MCF 10A (cell line): ENCODE measurements at regions of chr11 and their contacts with region 1.

Region 1: DNA sequence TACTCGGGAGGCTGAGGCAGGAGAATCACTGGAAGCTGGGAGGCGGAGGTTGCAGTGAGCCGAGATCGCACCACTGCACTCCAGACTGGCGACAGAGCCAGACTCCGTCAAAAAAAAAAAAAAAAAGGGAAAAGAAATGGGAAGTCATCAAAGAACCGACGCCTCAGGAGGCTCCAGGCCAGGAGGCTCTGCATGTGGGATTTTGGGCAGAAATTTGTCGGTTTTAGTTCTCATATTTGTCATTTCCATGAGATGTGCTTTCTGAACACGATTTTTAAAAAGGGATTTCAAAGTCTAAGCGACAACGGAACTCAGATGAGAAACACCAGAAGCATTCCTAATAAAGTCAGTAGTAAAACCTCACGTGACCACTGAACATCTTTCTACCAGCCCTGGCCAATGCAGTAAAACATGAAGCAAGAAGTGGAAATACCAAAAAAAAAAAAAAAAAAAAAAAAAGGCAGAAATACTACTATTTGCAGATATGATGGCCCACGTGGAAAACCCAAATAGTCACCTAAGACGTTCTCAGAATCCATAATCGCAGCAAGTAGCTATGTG is 738 bp upstream of the LTO1 start:
- DNase-seq: no peak
- H3K4me3 Mint-ChIP-seq: peak overlapping the region; percentile 95
- H3K27ac Mint-ChIP-seq: peak overlapping the region; percentile 90
- H3K4me1 Mint-ChIP-seq: no peaks in the 10 kb centered on the region
- H3K27me3 Mint-ChIP-seq: no peaks in the 10 kb centered on the region
- CTCF ChIP-seq: no peak

Region 2: DNA sequence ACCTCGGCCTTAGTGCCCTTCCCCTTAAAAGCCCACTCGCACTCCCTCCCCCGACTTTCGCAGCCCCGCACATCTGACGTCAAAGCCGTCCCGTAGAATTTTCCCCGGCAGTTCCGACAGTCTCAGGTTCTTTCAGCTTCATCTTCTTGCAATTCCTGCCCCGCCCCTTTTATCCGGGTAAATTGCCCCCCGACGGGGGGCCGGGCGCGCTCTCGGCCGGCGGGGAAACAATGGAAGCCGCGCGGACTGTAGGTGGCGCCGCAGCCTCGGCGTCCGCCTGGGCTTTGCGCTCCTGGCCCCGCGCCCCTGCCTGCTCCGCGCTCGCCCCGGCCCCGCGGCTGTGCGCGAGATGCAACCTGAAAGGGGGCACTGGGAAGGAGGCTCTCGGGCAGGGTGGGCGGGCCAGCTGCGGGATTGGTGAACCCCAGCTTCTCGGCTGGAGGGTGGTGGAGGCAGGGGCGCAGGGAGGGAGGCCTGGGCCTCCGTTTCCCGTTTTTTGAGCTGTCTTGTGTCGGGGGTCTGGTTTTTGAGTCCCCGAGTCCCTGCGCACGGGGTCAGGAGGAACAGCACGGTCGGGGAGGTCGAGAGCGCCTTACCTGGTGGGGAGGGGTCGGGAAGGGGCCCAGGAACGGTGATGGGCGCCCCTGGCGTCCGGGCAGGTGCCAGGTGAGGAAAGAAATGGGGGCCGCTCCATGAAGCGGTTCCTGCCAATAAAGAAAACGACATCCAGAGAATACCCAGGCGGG is 28.8 kb after region 1 on chr11:
- CTCF ChIA-PET with region 1: no interaction called
- POLR2A ChIA-PET with region 1: no interaction called
- intact Hi-C with region 1: no loop called
- DNase-seq: no peak
- H3K4me3 Mint-ChIP-seq: no peak overlapping the region
- H3K27ac Mint-ChIP-seq: no peak overlapping the region
- H3K4me1 Mint-ChIP-seq: peaks cover 10% of the 10 kb centered on the region
- H3K27me3 Mint-ChIP-seq: no peaks in the 10 kb centered on the region
- CTCF ChIP-seq: no peak

Region 3: GRCh38 chr11:69874984-69875624 is 199.2 kb after region 1 on chr11:
- CTCF ChIA-PET with region 1: no interaction called
- POLR2A ChIA-PET with region 1: no interaction called
- intact Hi-C with region 1: no loop called
- DNase-seq: no peak
- H3K4me3 Mint-ChIP-seq: no peak overlapping the region
- H3K27ac Mint-ChIP-seq: no peak overlapping the region
- H3K4me1 Mint-ChIP-seq: no peaks in the 10 kb centered on the region
- H3K27me3 Mint-ChIP-seq: peaks cover 13% of the 10 kb centered on the region
- CTCF ChIP-seq: no peak

Region 4: GRCh38 chr11:69888483-69889076 is 212.7 kb after region 1 on chr11:
- CTCF ChIA-PET with region 1: interaction called, 11 read pairs
- POLR2A ChIA-PET with region 1: no interaction called
- intact Hi-C with region 1: no loop called
- DNase-seq: peak; percentile 69
- H3K4me3 Mint-ChIP-seq: no peak overlapping the region
- H3K27ac Mint-ChIP-seq: no peak overlapping the region
- H3K4me1 Mint-ChIP-seq: no peaks in the 10 kb centered on the region
- H3K27me3 Mint-ChIP-seq: peaks cover 12% of the 10 kb centered on the region
- CTCF ChIP-seq: peak; percentile 89

Region 5: DNA sequence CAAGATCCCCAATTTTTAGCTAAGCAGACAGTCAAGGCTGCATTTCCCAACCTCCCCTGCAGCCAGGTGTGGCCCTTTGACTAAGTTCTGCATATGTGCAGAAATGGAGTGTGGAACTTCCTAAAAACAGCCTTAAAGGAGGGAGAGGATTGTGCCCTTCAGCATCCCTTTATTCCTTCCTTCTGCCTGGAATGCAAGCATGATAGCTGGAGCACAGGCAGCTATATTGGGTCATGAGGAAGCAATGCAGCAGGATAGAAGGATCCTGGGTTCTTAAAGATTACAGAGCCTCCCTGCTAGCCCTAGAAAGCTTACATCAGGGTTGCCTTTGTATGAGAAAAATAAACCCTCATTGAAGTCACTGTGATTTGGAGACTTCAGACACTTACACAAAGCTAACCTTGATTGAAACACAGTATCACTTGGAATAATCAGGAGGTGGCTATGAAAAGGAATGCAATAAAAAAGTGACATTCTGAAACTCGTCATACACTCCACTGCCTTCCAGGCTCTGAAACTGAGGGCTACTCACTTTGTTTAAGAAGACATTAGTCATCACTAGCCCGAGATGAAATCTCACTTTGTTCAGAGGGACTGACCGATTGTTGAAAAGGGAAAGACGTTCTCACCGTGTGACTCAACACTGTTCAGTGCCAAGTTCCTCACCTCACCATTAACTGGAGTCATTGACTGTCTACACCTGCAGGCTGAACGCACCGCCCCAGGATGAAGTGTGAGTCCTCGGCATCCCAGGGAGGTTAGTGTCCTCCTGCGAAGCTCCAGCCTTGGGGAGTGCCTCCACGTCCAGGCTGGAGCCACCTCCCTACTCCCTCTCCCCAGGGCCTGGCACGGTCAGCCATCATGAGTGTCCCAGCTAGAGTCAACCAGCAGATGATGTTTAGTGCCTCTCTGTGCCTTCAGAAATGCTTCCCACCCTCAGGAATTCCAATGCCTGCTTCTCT is 557.4 kb after region 1 on chr11:
- CTCF ChIA-PET with region 1: no interaction called
- POLR2A ChIA-PET with region 1: no interaction called
- intact Hi-C with region 1: no loop called
- DNase-seq: peak; percentile 99
- H3K4me3 Mint-ChIP-seq: peak overlapping the region; percentile 44
- H3K27ac Mint-ChIP-seq: peak overlapping the region; percentile 85
- H3K4me1 Mint-ChIP-seq: peaks cover 16% of the 10 kb centered on the region
- H3K27me3 Mint-ChIP-seq: no peaks in the 10 kb centered on the region
- CTCF ChIP-seq: no peak